Right lobe of liver (tissue), 6 donors: ENCODE measurements at regions of chr2 and their contacts with region 1.

Region 1: GRCh38 chr2:135709992-135710391 is 31.7 kb upstream of the UBXN4 start:
- DNase-seq: peak; percentile 51 to 59 (median 53)
- ATAC-seq: peak; percentile 77 to 90 (median 88)
- H3K4me3 ChIP-seq: no peak overlapping the region
- H3K27ac ChIP-seq: no peak overlapping the region
- H3K4me1 ChIP-seq: no peaks in the 10 kb centered on the region
- H3K27me3 ChIP-seq: no peaks in the 10 kb centered on the region
- CTCF ChIP-seq: peak; percentile 85 to 96 (median 94)
- POLR2A ChIP-seq: no peak

Region 2: DNA sequence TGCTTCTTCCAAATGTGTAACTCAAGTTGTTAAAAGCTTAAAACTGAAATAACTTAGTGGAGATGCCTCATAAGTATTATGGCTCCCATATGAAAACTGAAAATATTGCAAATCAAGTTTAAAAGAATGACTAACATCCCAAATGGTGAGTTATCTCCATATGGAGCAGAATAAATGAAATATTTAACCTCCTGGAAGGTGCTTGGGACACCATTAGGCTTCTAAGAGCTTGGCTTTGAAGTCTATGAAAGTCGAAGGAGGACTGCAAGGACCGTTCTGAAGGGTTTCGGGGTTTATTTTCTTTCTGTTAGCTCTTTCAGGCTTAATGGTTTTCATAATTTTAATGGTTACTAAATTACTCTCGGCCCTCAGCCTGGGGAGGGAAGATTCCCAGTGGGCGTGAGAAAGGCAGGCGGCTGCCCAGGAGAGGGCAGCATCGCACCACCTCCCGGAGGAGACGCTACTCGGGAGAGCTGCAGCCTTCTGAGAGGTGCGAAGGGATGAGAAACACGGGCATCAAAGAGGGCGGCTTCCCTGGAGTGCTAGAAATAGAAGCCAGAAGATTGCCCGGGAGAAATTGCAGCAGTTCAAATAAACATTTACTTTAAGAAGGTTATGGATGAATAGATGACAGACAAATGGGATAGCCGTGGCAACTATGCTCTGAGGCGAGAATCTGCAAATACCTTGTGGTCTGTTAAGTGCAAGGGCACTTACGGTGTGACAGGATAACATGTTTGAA is 705.8 kb before region 1 on chr2:
- intact Hi-C with region 1: loop called in 1 of 2 experiments (anchors 10 kb)
- DNase-seq: peak; percentile 73 to 80 (median 78)
- ATAC-seq: peak; percentile 100
- H3K4me3 ChIP-seq: no peak overlapping the region
- H3K27ac ChIP-seq: no peak overlapping the region
- H3K4me1 ChIP-seq: no peaks in the 10 kb centered on the region
- H3K27me3 ChIP-seq: peaks cover 0 to 3% of the 10 kb centered on the region in 2 donors
- CTCF ChIP-seq: peak; percentile 81 to 97 (median 94)
- POLR2A ChIP-seq: no peak

Region 3: DNA sequence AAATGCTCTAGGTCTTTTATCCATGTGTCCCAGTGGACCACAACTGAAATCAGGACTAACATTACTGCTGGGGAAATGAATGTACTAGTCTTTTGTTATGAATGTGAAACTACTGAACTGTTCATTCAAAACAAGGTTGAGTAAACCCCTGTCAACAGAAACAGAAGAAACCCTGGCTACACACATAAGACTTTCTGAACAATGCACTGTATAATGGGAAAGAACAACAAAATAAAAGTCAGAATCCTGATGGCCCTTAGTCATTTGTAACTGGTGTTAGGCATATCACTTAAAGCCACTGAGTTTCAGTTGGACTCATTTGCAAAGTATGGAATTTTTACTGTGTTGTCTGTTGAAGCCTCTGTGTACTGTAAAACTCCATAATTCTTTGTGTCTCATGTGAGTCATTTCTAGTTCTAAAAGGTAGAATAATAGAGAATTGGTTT is 45.3 kb before region 1 on chr2:
- intact Hi-C with region 1: no loop called
- DNase-seq: no peak
- ATAC-seq: no peak
- H3K4me3 ChIP-seq: no peak overlapping the region
- H3K27ac ChIP-seq: no peak overlapping the region
- H3K4me1 ChIP-seq: no peaks in the 10 kb centered on the region
- H3K27me3 ChIP-seq: no peaks in the 10 kb centered on the region
- CTCF ChIP-seq: no peak
- POLR2A ChIP-seq: no peak